ENCODE measurements at regions of chr11 and their contacts with region 1.

Region 1: GRCh38 chr11:111926505-111927391 is 8.0 kb downstream of the C11orf52 start:
- DNase-seq: peak; percentile 96
- ATAC-seq: peak; percentile 93
- H3K4me3 Mint-ChIP-seq: peak overlapping the region; percentile 82
- H3K27ac Mint-ChIP-seq: peak overlapping the region; percentile 91
- H3K4me1 Mint-ChIP-seq: peaks cover 16% of the 10 kb centered on the region
- H3K27me3 Mint-ChIP-seq: peaks cover 7% of the 10 kb centered on the region

Region 2: DNA sequence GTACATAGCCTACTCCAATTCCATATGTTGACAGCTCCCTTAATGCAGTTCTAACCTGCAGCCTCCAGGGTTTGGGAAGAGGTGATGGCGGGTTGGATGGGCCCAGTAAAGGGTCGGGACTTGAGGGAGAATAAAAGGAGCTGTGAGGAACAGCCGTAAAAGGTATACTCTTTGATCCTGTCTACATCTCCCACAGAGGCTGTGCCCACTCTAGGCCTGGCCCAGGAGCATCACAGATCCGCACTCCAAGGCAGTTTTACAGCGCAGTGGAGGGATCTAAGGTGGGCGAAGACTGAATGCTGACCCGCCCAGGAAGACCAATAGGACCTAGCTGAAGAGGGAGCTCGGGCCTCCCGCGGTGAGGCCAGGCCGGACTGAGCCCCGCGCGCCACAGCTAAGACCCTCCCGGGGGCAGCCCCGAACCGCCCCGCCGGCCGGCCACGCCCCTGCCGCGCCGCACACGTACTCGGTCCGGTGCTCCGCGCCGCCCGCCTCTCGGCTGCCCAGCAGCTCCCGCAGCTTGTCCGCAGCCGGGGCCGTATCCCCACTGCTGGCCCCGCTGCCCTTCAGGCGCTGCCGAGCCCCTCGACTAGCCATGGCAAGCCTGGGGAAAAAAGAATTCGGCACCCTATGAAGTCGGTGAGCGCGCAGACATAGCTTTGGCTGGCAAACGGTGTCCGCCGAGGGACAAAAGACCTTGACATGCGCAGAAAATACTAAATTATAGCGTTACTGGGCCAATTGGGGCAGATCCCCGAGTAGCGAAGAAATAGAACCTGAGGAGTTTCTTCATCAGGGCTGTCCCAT is 55.7 kb before region 1 on chr11 and contains the start of gene ALG9:
- CTCF ChIA-PET with region 1: interaction called, 8 read pairs
- POLR2A ChIA-PET with region 1: interaction called, 21 read pairs
- DNase-seq: peak; percentile 91
- ATAC-seq: peak; percentile 93
- H3K4me3 Mint-ChIP-seq: peak within 1 kb of the TSS; percentile 89
- H3K27ac Mint-ChIP-seq: peak within 1 kb of the TSS; percentile 90
- H3K4me1 Mint-ChIP-seq: peaks cover 23% of the 10 kb centered on the region
- H3K27me3 Mint-ChIP-seq: no peaks in the 10 kb centered on the region
- total RNA-seq, gene ALG9: 29.2 to 31.1 TPM

Region 3: GRCh38 chr11:111938687-111939160 is 12.0 kb after region 1 on chr11:
- CTCF ChIA-PET with region 1: interaction called, 18 read pairs
- POLR2A ChIA-PET with region 1: interaction called, 17 read pairs
- DNase-seq: peak; percentile 43
- ATAC-seq: peak; percentile 55
- H3K4me3 Mint-ChIP-seq: peak overlapping the region; percentile 71
- H3K27ac Mint-ChIP-seq: peak overlapping the region; percentile 43
- H3K4me1 Mint-ChIP-seq: peaks cover 37% of the 10 kb centered on the region
- H3K27me3 Mint-ChIP-seq: no peaks in the 10 kb centered on the region

Region 4: DNA sequence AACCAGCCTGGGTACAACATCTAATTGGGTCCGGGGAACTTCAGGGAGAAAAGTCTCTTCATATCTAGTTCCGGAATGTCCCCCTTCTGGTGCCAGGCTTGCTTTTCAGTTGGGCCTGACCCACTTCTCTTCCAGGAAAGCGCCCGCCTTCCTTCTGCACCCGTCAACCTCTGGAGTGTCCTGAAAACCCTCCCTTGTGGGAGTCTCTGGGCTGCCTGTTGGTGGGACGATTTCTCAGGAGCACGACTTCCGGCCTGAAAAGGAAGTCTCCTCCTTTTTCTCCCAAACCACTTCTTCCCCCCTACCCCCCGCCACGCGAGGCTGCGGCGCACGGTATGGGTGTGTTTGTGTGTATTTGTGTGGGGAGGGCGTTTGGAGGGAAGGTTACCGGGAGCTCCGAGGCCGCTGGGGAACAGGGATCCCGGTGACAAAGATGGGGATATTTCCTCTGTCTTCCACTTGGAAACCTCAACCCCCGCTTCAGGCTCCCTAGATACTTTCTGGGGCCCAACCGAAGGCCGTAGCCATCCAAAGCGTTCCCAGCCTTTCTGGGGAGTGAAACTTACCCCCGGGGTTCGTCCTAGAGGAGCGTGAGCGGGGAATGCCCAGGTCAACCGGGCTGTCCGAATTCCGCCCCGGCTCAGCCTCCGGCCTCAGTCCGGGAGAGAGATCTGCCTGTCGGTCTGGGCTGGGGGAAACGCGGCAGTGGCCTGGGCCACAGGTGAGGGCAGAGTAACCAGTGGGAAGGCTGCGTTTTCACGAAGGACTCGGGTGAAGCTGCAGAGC is 147.5 kb after region 1 on chr11 and contains the start of gene NKAPD1:
- CTCF ChIA-PET with region 1: interaction called, 11 read pairs
- POLR2A ChIA-PET with region 1: no interaction called
- DNase-seq: peak; percentile 85
- ATAC-seq: peak; percentile 78
- H3K4me3 Mint-ChIP-seq: peak within 1 kb of the TSS; percentile 94
- H3K27ac Mint-ChIP-seq: peak within 1 kb of the TSS; percentile 96
- H3K4me1 Mint-ChIP-seq: peaks cover 28% of the 10 kb centered on the region
- H3K27me3 Mint-ChIP-seq: peaks cover 10% of the 10 kb centered on the region
- total RNA-seq, gene NKAPD1: 17.1 to 22.9 TPM

Measured in activated CD8-positive, alpha-beta T cell treated with anti-CD3 and anti-CD28 coated beads, Interleukin-2, amount 10 ng/mL, durations not matched to agents 7 days and 5 days (primary cell).